CD4-positive, alpha-beta memory T cell (primary cell): ENCODE measurements at regions of chr7 and their contacts with region 1.

Region 1: DNA sequence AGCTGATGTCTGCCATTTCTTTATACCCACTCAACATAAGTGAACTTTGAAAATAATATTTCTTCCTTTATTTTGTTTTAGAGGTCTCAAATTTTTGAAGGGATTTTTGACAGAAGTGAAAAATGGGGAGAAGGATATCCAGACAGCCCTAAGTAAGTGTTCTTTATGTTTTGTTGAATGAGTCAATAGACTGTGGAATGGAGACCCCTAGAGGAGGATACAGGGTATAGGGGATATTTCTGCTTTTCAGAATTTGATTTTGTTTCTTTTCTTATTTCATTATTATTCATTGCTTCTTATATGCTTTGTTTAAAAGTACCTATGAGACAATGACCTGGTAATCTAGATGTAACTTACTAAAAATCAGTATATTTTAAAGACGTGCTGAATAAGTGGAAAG is 34.4 kb downstream of the PLEKHA8 start:
- DNase-seq: peak in 3 of 5 donors; percentile 8 to 16 (median 15)
- H3K4me3 ChIP-seq: no peak overlapping the region
- H3K4me3 Mint-ChIP-seq: no peak overlapping the region
- H3K27ac ChIP-seq: no peak overlapping the region
- H3K27ac Mint-ChIP-seq: no peak overlapping the region
- H3K4me1 ChIP-seq: no peaks in the 10 kb centered on the region
- H3K4me1 Mint-ChIP-seq: peaks cover 0 to 6% (median 2%) of the 10 kb centered on the region in 4 donors
- H3K27me3 ChIP-seq: no peaks in the 10 kb centered on the region
- H3K27me3 Mint-ChIP-seq: no peaks in the 10 kb centered on the region

Region 2: DNA sequence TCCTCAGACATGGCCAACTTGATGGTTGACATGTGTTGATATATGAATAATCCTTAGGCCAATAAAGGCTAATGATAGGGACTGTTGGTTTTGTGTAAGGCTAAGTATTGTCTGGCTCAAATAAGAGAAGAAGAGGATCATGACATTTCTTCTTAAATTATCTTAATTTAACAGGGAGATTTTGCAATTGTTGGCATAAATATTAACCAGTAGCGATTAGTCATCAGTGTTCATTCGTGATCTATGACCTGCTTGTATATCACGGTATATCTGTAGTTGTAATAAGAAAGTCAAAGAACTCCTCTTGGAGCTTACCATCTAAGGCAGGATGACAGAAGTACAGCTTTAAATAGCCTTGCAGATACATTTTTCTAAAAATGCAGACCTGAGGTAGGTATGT is 1453.9 kb before region 1 on chr7:
- CTCF ChIA-PET with region 1: no interaction called
- POLR2A ChIA-PET with region 1: no interaction called
- intact Hi-C with region 1: no loop called
- DNase-seq: no peak
- H3K4me3 ChIP-seq: no peak overlapping the region
- H3K4me3 Mint-ChIP-seq: no peak overlapping the region
- H3K27ac ChIP-seq: no peak overlapping the region
- H3K27ac Mint-ChIP-seq: no peak overlapping the region
- H3K4me1 ChIP-seq: no peaks in the 10 kb centered on the region
- H3K4me1 Mint-ChIP-seq: no peaks in the 10 kb centered on the region
- H3K27me3 ChIP-seq: no peaks in the 10 kb centered on the region
- H3K27me3 Mint-ChIP-seq: peaks cover 2 to 9% of the 10 kb centered on the region in 2 donors

Region 3: DNA sequence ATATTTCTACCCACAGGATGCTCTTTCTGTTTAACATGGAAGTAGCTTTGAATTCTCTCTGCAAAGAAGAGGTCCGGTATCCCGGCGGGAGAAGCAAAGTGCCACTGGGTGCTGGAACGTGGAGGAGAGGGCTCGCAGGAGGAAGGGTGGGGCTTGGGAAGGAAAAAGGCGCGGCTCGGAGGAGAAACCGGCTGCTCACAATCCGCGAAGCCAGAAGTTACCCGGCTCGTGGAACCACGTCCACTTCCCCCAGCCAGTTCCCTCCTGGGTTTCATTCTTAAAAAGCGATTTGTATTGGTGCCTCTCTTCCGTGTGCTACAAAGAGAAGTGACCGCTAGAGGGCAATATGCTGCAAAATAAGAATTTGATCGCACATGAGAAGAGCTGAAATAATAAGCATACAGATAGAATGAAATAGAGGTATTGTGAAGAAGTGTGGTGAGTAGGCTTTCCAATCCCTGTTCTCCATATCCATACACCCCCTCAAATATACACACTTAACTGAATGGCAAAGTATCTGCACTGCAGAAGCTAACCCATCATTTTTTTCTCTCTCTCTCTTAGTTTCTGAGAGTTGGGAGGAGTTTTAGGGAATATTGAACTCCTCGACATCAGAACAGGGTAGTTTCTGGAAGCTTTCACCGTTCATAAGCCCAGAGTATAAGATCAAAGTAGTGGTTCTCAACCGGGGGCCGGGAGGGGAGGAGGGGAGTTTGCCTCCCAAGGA is 1135.6 kb before region 1 on chr7:
- CTCF ChIA-PET with region 1: no interaction called
- POLR2A ChIA-PET with region 1: no interaction called
- intact Hi-C with region 1: loop called (anchors 10 kb)
- DNase-seq: peak; percentile 57 to 64 (median 61)
- H3K4me3 ChIP-seq: peak overlapping the region; percentile 25 to 52
- H3K4me3 Mint-ChIP-seq: peak overlapping the region; percentile 87 to 97 (median 92)
- H3K27ac ChIP-seq: peak overlapping the region; percentile 22
- H3K27ac Mint-ChIP-seq: peak overlapping the region in 6 of 7 donors; percentile 7 to 85 (median 76)
- H3K4me1 ChIP-seq: peaks cover 17% of the 10 kb centered on the region
- H3K4me1 Mint-ChIP-seq: peaks cover 17 to 33% (median 28%) of the 10 kb centered on the region in 4 donors
- H3K27me3 ChIP-seq: no peaks in the 10 kb centered on the region
- H3K27me3 Mint-ChIP-seq: peaks cover 2 to 6% of the 10 kb centered on the region in 2 donors

Region 4: GRCh38 chr7:29878081-29878688 is 184.4 kb before region 1 on chr7:
- CTCF ChIA-PET with region 1: interaction called, 31 read pairs
- POLR2A ChIA-PET with region 1: no interaction called
- intact Hi-C with region 1: no loop called
- DNase-seq: peak in 4 of 5 donors; percentile 6 to 12 (median 10)
- H3K4me3 ChIP-seq: no peak overlapping the region
- H3K4me3 Mint-ChIP-seq: no peak overlapping the region
- H3K27ac ChIP-seq: no peak overlapping the region
- H3K27ac Mint-ChIP-seq: no peak overlapping the region
- H3K4me1 ChIP-seq: no peaks in the 10 kb centered on the region
- H3K4me1 Mint-ChIP-seq: peaks cover 3 to 5% (median 3%) of the 10 kb centered on the region in 4 donors
- H3K27me3 ChIP-seq: no peaks in the 10 kb centered on the region
- H3K27me3 Mint-ChIP-seq: peaks cover 9 to 18% of the 10 kb centered on the region in 2 donors

Region 5: DNA sequence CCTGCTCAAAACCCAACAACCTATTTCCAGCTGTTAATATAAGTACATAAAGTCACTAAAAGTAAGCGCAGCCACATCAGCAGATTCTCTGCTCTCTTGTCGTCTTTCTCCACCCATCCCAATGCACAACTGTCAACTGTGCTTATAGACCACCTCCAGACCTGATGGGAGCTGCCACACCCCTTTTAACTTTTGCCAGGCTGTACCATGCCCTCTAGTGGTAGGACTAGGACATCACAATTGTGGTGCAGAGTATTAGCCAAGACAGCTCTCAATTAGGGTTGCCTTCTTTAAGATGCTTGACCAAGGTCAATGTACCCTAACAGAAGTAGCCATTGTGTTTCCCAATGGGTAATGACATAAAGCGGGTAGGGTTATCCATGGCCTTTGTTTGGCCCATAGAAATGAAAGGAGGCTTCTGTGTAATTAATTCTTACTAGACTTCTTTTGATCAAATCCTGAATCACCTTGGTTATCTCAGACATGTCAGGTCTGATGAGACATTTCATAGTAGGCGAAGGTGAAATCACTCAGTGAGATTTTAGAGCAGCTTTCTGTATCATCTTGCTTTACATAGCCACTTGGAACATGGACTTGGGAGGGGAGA is 141.1 kb before region 1 on chr7:
- CTCF ChIA-PET with region 1: interaction called, 6 read pairs
- POLR2A ChIA-PET with region 1: interaction called, 3 read pairs
- intact Hi-C with region 1: loop called (anchors 1 kb)
- DNase-seq: peak; percentile 24 to 59 (median 41)
- H3K4me3 ChIP-seq: no peak overlapping the region
- H3K4me3 Mint-ChIP-seq: no peak overlapping the region
- H3K27ac ChIP-seq: no peak overlapping the region
- H3K27ac Mint-ChIP-seq: no peak overlapping the region
- H3K4me1 ChIP-seq: no peaks in the 10 kb centered on the region
- H3K4me1 Mint-ChIP-seq: no peaks in the 10 kb centered on the region
- H3K27me3 ChIP-seq: no peaks in the 10 kb centered on the region
- H3K27me3 Mint-ChIP-seq: peaks cover 7% of the 10 kb centered on the region in 2 donors

Region 6: GRCh38 chr7:30019387-30019786 is 43.2 kb before region 1 on chr7:
- CTCF ChIA-PET with region 1: interaction called, 5 read pairs
- POLR2A ChIA-PET with region 1: no interaction called
- intact Hi-C with region 1: loop called (anchors 2 kb)
- DNase-seq: no peak
- H3K4me3 ChIP-seq: no peak overlapping the region
- H3K4me3 Mint-ChIP-seq: no peak overlapping the region
- H3K27ac ChIP-seq: no peak overlapping the region
- H3K27ac Mint-ChIP-seq: no peak overlapping the region
- H3K4me1 ChIP-seq: peaks cover 9% of the 10 kb centered on the region
- H3K4me1 Mint-ChIP-seq: peaks cover 7 to 13% (median 10%) of the 10 kb centered on the region in 4 donors
- H3K27me3 ChIP-seq: no peaks in the 10 kb centered on the region
- H3K27me3 Mint-ChIP-seq: no peaks in the 10 kb centered on the region

Region 7: DNA sequence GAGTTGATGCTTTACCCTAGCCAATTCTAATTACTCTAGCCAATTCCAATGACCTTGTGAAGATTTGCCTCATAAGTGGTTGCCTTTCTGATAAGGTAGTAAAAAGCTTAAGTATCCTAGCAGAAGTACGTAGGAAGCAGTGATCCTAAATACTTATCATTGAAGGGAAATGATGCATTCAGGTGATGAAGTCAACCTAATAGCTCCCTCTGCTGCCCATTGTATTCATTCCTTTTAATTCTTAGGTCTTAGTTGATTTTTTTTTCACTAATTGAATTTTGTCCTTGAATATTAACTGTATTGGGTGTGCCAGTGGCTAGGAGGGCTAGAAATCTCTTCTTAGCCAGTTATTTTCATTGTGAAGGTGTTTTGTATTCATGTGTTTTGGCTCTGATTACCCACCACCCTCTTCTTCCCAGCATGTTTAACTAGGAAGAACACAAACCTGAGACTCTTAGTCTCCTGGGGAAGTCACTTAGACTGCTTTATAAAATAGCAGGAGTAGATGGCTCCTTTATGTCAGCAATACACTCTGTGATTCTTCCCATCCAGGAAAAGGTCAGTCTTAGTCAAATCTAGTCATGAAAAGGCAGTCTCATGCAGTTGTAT is 11.9 kb after region 1 on chr7:
- CTCF ChIA-PET with region 1: interaction called, 17 read pairs
- POLR2A ChIA-PET with region 1: no interaction called
- intact Hi-C with region 1: no loop called
- DNase-seq: peak in 4 of 5 donors; percentile 4 to 8 (median 8)
- H3K4me3 ChIP-seq: no peak overlapping the region
- H3K4me3 Mint-ChIP-seq: no peak overlapping the region
- H3K27ac ChIP-seq: no peak overlapping the region
- H3K27ac Mint-ChIP-seq: peak overlapping the region in 1 of 7 donors; percentile 25
- H3K4me1 ChIP-seq: no peaks in the 10 kb centered on the region
- H3K4me1 Mint-ChIP-seq: peaks cover 0 to 2% (median 0%) of the 10 kb centered on the region in 4 donors
- H3K27me3 ChIP-seq: no peaks in the 10 kb centered on the region
- H3K27me3 Mint-ChIP-seq: no peaks in the 10 kb centered on the region

Region 8: GRCh38 chr7:30564243-30564892 is 501.8 kb after region 1 on chr7:
- CTCF ChIA-PET with region 1: interaction called, 9 read pairs
- POLR2A ChIA-PET with region 1: no interaction called
- intact Hi-C with region 1: loop called (anchors 1 kb)
- DNase-seq: peak; percentile 64 to 73 (median 67)
- H3K4me3 ChIP-seq: no peak overlapping the region
- H3K4me3 Mint-ChIP-seq: no peak overlapping the region
- H3K27ac ChIP-seq: no peak overlapping the region
- H3K27ac Mint-ChIP-seq: peak overlapping the region in 3 of 7 donors; percentile 30 to 84 (median 50)
- H3K4me1 ChIP-seq: no peaks in the 10 kb centered on the region
- H3K4me1 Mint-ChIP-seq: no peaks in the 10 kb centered on the region
- H3K27me3 ChIP-seq: no peaks in the 10 kb centered on the region
- H3K27me3 Mint-ChIP-seq: no peaks in the 10 kb centered on the region